Activated CD4-positive, alpha-beta memory T cell treated with anti-CD3 and anti-CD28 coated beads for 36 hours (primary cell): ENCODE measurements at regions of chr9 and their contacts with region 1.

Region 1: GRCh38 chr9:5582835-5583195 is 46.1 kb upstream of the RIC1 start:
- DNase-seq: peak; percentile 61
- H3K4me3 Mint-ChIP-seq: no peak overlapping the region
- H3K27ac Mint-ChIP-seq: peak overlapping the region; percentile 80
- H3K4me1 Mint-ChIP-seq: peaks cover 66% of the 10 kb centered on the region
- H3K27me3 Mint-ChIP-seq: no peaks in the 10 kb centered on the region

Region 2: DNA sequence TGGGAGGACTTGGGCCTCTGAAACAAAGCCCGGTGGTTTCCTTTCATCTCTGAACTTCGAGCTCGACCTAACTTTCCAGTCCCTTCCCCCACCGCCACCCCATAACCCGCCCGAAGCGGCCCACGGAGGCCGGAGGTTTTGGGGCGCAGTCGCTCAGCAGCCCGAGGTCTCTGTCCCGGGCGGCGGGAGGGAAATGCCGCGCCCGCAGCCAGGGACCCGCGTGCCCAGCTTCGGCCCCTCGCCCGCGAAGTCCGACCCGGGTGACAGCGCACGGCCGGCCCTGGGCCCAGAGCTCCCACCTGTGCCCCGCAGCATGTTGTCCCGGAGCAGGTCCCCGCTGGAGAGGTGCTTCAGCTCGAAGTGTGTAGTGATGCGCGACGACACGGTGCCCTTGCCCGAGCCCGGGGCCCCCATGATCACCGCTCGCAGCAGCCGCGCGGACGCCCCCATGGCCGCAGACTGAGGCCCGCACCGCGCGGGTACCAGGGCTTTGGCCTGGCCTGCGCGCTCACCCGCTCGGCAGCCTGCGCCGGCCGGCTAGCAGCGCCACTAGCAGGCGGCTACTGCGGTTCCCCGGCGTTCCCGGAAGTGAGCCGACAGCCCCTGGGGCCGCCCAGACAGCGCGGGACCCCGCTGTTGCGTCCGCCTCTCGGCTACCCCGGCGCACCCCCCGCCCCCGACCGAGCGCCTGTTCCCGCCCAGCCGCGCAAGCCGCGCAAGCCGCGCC is 842.0 kb before region 1 on chr9 and contains the start of gene AK3:
- CTCF ChIA-PET with region 1: no interaction called
- POLR2A ChIA-PET with region 1: no interaction called
- intact Hi-C with region 1: loop called (anchors 10 kb)
- DNase-seq: peak; percentile 90
- H3K4me3 Mint-ChIP-seq: peak within 1 kb of the TSS; percentile 83
- H3K27ac Mint-ChIP-seq: peak within 1 kb of the TSS; percentile 78
- H3K4me1 Mint-ChIP-seq: peaks cover 34% of the 10 kb centered on the region
- H3K27me3 Mint-ChIP-seq: no peaks in the 10 kb centered on the region
- total RNA-seq, gene AK3: 33.8 to 34.5 TPM

Region 3: GRCh38 chr9:4970970-4971641 is 611.7 kb before region 1 on chr9:
- CTCF ChIA-PET with region 1: no interaction called
- POLR2A ChIA-PET with region 1: interaction called, 3 read pairs
- intact Hi-C with region 1: loop called (anchors 1 kb)
- DNase-seq: peak; percentile 86
- H3K4me3 Mint-ChIP-seq: no peak overlapping the region
- H3K27ac Mint-ChIP-seq: no peak overlapping the region
- H3K4me1 Mint-ChIP-seq: peaks cover 26% of the 10 kb centered on the region
- H3K27me3 Mint-ChIP-seq: no peaks in the 10 kb centered on the region

Region 4: DNA sequence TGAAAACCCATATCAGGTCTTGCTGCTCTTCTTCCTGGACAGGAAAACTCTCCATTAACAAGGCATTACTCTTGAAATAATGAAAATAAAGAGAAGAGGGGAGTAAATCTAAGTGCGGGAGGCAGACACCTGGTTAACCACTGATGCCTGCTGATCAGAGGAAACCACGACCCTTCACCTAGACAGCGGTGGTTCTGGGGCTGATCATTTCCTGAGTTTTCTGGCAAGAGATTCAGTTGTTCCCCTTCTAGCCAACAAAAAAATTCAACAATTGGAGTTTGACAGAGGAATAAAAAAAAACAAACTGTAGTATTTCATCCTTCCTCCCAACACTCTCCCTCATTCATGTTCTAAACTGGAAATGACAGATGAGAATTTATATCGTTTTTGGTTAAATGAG is 281.3 kb before region 1 on chr9:
- CTCF ChIA-PET with region 1: no interaction called
- POLR2A ChIA-PET with region 1: no interaction called
- intact Hi-C with region 1: loop called (anchors 10 kb)
- DNase-seq: no peak
- H3K4me3 Mint-ChIP-seq: peak overlapping the region; percentile 25
- H3K27ac Mint-ChIP-seq: no peak overlapping the region
- H3K4me1 Mint-ChIP-seq: peaks cover 21% of the 10 kb centered on the region
- H3K27me3 Mint-ChIP-seq: no peaks in the 10 kb centered on the region

Region 5: GRCh38 chr9:5459289-5459829 is 123.5 kb before region 1 on chr9:
- CTCF ChIA-PET with region 1: no interaction called
- POLR2A ChIA-PET with region 1: interaction called, 8 read pairs
- intact Hi-C with region 1: loop called (anchors 2 kb)
- DNase-seq: peak; percentile 57
- H3K4me3 Mint-ChIP-seq: peak overlapping the region; percentile 68
- H3K27ac Mint-ChIP-seq: peak overlapping the region; percentile 87
- H3K4me1 Mint-ChIP-seq: peaks cover 73% of the 10 kb centered on the region
- H3K27me3 Mint-ChIP-seq: no peaks in the 10 kb centered on the region

Region 6: DNA sequence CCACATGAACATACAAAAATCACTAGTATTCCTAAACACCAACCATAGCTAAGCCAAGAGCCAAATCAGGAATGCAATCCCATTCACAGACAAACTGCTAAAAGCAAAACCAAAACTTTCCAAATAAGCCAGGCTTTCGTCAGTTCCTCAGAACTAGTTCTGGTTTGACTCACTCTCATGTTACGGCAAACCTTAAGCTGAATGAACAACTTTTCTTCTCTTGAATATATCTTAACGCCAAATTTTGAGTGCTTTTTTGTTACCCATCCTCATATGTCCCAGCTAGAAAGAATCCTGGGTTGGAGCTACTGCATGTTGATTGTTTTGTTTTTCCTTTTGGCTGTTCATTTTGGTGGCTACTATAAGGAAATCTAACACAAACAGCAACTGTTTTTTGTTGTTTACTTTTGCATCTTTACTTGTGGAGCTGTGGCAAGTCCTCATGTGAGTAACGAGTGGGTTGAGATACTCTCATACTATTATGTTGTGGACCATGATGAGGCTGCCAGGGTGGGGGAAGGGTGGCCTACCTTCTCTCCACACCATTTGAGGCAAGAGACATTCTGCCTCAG is 72.4 kb before region 1 on chr9 and contains the start of gene PDCD1LG2:
- CTCF ChIA-PET with region 1: interaction called, 4 read pairs
- POLR2A ChIA-PET with region 1: interaction called, 4 read pairs
- intact Hi-C with region 1: loop called (anchors 1 kb)
- DNase-seq: peak; percentile 82
- H3K4me3 Mint-ChIP-seq: peak within 1 kb of the TSS; percentile 73
- H3K27ac Mint-ChIP-seq: peak within 1 kb of the TSS; percentile 90
- H3K4me1 Mint-ChIP-seq: peaks cover 51% of the 10 kb centered on the region
- H3K27me3 Mint-ChIP-seq: no peaks in the 10 kb centered on the region
- total RNA-seq, gene PDCD1LG2: 0.73 to 0.83 TPM

Region 7: GRCh38 chr9:5557606-5558587 is 24.9 kb before region 1 on chr9:
- CTCF ChIA-PET with region 1: interaction called, 7 read pairs
- POLR2A ChIA-PET with region 1: no interaction called
- intact Hi-C with region 1: loop called (anchors 1 kb)
- DNase-seq: peak; percentile 65
- H3K4me3 Mint-ChIP-seq: no peak overlapping the region
- H3K27ac Mint-ChIP-seq: peak overlapping the region; percentile 24
- H3K4me1 Mint-ChIP-seq: peaks cover 46% of the 10 kb centered on the region
- H3K27me3 Mint-ChIP-seq: no peaks in the 10 kb centered on the region